ENCODE measurements at regions of chr12 and their contacts with region 1.

Region 1: DNA sequence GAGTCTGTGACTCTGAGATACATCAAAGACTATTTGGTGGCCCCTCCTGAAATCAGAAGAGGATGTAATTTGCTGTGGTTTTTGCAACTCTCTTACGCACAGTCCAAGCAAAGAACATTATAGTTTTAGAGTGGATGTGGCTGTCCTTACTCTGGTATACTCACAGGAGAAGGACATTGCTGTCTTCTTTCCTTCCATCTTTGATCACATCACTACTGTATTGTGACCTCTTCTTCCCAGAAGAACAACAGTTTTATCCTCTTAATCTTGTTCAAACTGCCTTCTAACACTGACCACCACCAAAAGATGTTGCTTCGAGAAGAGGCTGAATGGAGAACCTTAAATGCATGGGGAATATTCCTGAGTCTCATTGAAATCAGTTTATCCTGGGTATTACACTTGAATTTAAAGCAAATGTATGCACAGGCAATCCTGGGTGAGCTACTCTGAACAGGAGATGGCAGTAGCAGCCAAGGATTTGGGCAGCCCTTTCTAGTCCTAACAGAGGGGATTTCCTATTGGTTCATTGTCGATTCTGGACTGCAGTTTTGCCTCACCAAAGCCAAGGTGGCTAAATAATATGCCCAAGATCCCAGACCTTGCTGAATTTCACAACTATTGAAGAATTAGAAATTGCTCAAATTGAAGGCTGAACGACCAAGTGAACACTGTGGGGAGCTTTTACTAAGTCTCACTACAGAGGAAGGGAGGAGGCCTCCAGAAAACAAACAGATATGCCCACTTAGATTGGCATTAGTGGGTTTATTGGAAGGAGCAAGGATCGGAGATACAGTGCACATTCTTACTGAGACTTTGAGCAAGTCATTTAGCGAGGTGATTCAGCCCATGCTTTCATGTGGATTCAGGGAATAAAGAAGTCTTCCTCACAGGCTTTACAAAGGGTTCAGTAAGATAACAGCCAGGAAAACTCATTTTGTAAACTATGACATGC is 282.8 kb downstream of the PAWR start:
- DNase-seq: peak; percentile 94
- ATAC-seq: peak; percentile 99
- H3K4me3 ChIP-seq: peak overlapping the region; percentile 24; the same call in 1 of the 2 replicates
- H3K27ac ChIP-seq: peak overlapping the region; percentile 33
- H3K4me1 ChIP-seq: peaks cover 23% of the 10 kb centered on the region
- H3K27me3 ChIP-seq: no peaks in the 10 kb centered on the region
- CTCF ChIP-seq: peak; percentile 97

Region 2: DNA sequence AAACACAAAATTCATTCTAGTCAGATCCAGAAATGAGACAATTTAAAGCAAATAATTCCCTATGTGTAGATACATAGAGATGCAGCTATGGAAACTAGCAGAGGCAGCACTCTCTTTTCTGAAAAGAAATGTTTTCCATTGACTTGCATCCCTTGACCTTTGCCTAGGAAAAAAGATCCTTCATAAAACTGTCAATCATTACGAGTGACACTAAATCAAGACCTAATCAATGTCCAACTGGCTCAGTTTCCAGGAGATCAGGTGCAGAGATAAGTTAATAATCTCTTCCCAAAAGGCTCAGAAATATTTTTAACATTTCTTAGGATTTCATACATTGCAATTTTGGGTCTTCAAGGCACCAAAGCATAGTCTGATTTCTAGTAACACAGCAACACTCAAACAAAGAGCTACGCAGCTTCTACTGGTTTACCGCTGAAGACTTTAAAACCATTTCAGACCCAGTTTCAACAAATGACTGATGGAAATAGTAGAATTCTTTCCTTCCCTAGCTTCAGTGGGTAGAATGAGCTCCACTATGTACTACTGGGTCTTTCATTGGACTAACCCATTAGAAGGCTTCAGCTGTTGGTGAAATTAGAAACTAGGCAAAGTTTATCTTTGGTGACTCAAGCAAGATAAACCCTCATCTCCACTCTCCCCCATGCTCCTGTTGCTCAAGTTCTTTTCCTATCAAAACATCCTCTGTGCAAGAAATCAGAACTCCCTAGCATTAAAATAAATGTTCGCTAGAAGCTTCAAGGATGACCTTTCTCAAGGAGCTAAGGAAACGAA is 123.4 kb after region 1 on chr12:
- CTCF ChIA-PET with region 1: no interaction called
- POLR2A ChIA-PET with region 1: no interaction called
- intact Hi-C with region 1: loop called (anchors 1 kb)
- DNase-seq: peak; percentile 35
- ATAC-seq: no peak
- H3K4me3 ChIP-seq: no peak overlapping the region
- H3K27ac ChIP-seq: no peak overlapping the region
- H3K4me1 ChIP-seq: peaks cover 50% of the 10 kb centered on the region
- H3K27me3 ChIP-seq: no peaks in the 10 kb centered on the region
- CTCF ChIP-seq: no peak

Region 3: GRCh38 chr12:79737875-79738718 is 330.1 kb after region 1 on chr12:
- CTCF ChIA-PET with region 1: no interaction called
- POLR2A ChIA-PET with region 1: no interaction called
- intact Hi-C with region 1: loop called (anchors 1 kb)
- DNase-seq: peak; percentile 89
- ATAC-seq: peak; percentile 72
- H3K4me3 ChIP-seq: no peak overlapping the region
- H3K27ac ChIP-seq: no peak overlapping the region
- H3K4me1 ChIP-seq: peaks cover 4% of the 10 kb centered on the region; the same call in 1 of the 2 replicates
- H3K27me3 ChIP-seq: no peaks in the 10 kb centered on the region
- CTCF ChIP-seq: peak; percentile 87

Measured in PC-3 (cell line).